Activated T-helper 2 cell treated with anti-CD3 and anti-CD28 coated beads, Interferon-gamma antibody, Interleukin-2, Interleukin-4, amounts not matched to agents 10 μg/mL and 5 μg/mL and 100 μg/mL, durations not matched to agents 14 hours and 24 hours and 36 hours (primary cell): ENCODE measurements at regions of chr3 and their contacts with region 1.

Region 1: GRCh38 chr3:150763122-150763841 is at the start of gene SIAH2:
- DNase-seq: peak; percentile 91
- H3K4me3 Mint-ChIP-seq: peak within 1 kb of the TSS; percentile 100
- H3K27ac Mint-ChIP-seq: peak within 1 kb of the TSS; percentile 100
- H3K4me1 Mint-ChIP-seq: peaks cover 50% of the 10 kb centered on the region
- H3K27me3 Mint-ChIP-seq: no peaks in the 10 kb centered on the region
- total RNA-seq, gene SIAH2: 108 and 116 TPM in 2 replicates

Region 2: DNA sequence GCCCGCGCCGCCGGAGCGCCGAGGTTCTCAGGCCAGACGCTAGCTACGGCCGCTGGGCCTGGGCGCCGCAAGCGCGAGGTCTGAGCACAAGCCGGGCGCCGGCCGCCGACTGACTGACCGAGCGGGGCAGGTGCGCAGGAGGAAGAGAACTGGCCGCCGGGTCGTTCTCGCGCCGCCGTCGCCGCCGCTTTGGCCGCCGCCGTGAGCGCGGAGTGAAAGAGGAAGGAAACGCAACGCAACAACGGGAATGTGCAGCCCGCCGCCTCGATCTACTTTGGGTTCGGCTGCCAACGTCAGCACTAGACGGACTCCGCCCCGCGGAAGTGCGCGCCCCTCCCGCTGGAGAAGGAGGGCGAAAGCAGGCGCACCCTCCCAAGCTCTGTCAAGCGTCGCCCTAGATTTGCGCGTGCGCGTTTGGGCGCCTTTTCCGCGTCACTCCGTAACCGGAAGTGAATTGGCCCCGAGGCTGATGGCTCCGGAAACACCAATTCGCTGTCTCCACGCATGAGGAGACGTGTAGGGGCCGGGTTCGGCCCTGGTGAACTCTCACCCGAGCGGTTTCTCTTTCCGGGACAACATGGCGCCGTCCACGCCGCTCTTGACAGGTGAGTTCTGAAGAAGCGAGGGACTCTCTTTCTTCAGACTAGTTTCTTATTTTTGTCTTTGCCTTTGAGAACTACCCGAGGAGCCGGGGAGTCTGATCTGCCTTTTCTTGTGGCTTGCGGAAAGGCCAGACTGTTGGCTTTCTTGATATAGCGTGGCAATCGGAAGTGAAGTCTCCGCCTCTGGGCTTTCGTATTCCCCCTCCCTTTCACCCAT is 216.8 kb before region 1 on chr3 and contains the starts of genes EIF2A and SERP1:
- intact Hi-C with region 1: loop called (anchors 1 kb)
- DNase-seq: peak; percentile 100
- H3K4me3 Mint-ChIP-seq: peak within 1 kb of the TSS; percentile 97
- H3K27ac Mint-ChIP-seq: peak within 1 kb of the TSS; percentile 92
- H3K4me1 Mint-ChIP-seq: peaks cover 56% of the 10 kb centered on the region
- H3K27me3 Mint-ChIP-seq: no peaks in the 10 kb centered on the region
- total RNA-seq, gene EIF2A: 124 and 126 TPM in 2 replicates
- total RNA-seq, gene SERP1: 89.2 and 91.7 TPM in 2 replicates

Region 3: GRCh38 chr3:150691414-150692040 is 71.8 kb before region 1 on chr3:
- intact Hi-C with region 1: no loop called
- DNase-seq: no peak
- H3K4me3 Mint-ChIP-seq: no peak overlapping the region
- H3K27ac Mint-ChIP-seq: no peak overlapping the region
- H3K4me1 Mint-ChIP-seq: no peaks in the 10 kb centered on the region
- H3K27me3 Mint-ChIP-seq: peaks cover 2% of the 10 kb centered on the region

Region 4: DNA sequence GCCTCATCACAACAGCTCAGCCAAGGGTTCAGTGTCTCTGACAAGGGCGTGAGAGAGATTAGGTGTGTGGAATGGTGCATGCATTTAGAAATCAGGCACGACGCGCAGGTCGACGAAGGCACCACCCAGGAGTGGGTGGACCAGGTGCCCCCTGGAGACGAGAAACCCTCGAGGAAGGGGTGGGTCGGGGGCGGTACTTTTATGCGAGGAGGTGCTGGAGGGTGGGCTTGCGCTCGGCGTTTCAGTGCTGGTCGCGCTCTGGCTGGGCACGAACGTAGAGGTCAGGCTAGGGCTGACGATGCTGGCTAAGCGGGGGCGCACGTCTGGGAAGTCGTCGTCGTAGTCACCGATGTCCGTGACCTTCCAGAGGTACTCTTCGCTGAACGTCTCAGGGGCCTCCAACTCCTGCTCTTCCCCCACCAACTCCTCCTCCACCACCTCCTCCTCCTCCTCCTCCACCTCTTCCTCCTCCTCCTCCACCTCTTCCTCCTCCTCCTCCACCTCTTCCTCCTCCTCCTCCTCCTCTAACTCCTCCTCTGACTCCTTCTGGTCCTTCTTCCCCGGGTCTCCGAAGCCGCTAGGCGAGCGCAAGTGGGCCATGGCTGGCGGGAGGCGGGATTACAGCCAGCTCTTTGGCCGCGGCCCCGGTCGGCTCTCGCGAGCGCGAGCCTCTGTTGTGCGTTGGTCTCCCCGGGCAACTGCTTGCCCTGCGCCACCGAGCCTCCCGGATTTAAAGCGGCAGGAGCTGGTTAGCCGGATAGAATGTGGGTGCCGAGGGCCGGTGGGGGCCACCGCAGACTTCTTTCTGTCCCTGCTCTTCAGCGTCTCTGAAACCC is 59.8 kb before region 1 on chr3 and contains the start of gene ERICH6:
- intact Hi-C with region 1: loop called (anchors 5 kb)
- DNase-seq: peak; percentile 83
- H3K4me3 Mint-ChIP-seq: peak within 1 kb of the TSS; percentile 94
- H3K27ac Mint-ChIP-seq: peak within 1 kb of the TSS; percentile 97
- H3K4me1 Mint-ChIP-seq: peaks cover 25% of the 10 kb centered on the region
- H3K27me3 Mint-ChIP-seq: peaks cover 7% of the 10 kb centered on the region
- total RNA-seq, gene ERICH6: 0.21 and 0.39 TPM in 2 replicates

Region 5: DNA sequence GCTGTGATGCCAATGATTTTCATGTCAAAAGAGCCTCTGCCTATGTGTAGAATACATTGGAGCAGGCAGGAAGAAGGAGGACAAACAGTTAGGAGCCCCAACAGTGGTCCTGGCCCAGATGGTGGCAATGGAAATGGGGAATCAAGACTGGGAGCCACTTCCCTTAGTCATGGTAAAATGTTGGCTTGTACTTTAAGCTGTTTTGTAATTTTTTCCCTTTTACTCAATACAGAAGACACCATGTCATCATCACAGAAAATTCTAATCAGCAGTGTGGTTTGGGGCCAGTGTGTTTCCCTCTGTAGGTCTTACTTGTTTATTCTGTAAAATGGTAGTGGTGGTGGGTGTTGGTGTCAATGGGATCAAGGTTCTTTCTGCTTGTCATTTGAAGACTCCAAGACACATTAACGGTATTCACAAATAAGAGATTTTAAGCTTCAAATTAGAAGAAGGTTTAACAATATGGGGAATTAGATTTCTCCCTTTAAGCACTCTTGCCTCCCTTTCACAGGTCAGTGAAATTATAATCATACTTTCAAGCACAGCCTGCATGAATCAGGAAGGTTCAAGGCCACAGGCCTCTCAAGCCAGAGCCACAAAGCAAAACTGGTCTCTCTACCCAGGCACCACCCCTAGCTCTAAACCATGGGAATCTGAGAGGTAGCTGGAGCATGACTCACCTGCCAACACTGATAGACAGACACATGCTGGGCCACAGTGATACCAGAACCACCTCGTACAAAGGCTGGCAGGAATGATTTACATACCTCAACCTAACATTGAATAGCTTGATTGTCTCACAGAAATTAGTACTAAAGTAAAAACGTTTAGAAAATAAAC is 25.2 kb before region 1 on chr3:
- intact Hi-C with region 1: loop called (anchors 1 kb)
- DNase-seq: no peak
- H3K4me3 Mint-ChIP-seq: peak overlapping the region; percentile 53
- H3K27ac Mint-ChIP-seq: peak overlapping the region; percentile 100
- H3K4me1 Mint-ChIP-seq: peaks cover 91% of the 10 kb centered on the region
- H3K27me3 Mint-ChIP-seq: no peaks in the 10 kb centered on the region

Region 6: GRCh38 chr3:150787741-150788370 is 24.6 kb after region 1 on chr3:
- intact Hi-C with region 1: loop called (anchors 1 kb)
- DNase-seq: peak; percentile 59
- H3K4me3 Mint-ChIP-seq: no peak overlapping the region
- H3K27ac Mint-ChIP-seq: no peak overlapping the region
- H3K4me1 Mint-ChIP-seq: peaks cover 41% of the 10 kb centered on the region
- H3K27me3 Mint-ChIP-seq: peaks cover 2% of the 10 kb centered on the region

Region 7: DNA sequence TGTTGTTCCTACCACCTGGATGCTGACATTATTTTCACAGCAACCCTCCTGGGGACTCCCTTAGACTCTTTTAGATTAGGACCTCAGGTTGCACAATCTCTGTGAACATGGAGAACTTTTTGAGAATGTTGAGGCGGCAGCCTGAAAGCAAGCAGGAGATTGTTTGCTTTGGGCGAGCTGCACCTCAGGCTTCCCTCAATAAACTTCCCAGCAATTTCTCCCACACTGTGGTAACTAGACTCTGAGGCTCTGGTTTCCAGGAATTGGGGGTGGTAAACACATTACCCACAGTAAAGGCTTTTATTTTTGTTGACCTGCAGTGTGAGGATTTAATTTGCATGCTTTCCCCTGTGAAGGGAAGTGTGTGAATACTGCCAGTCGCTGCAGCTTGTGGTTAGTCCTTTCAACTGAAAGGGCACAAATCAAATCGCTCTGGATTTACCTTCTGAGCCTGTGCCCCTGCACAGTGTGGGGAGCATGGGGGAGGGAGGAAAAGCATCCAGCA is 34.9 kb after region 1 on chr3:
- intact Hi-C with region 1: no loop called
- DNase-seq: no peak
- H3K4me3 Mint-ChIP-seq: no peak overlapping the region
- H3K27ac Mint-ChIP-seq: no peak overlapping the region
- H3K4me1 Mint-ChIP-seq: peaks cover 10% of the 10 kb centered on the region
- H3K27me3 Mint-ChIP-seq: peaks cover 22% of the 10 kb centered on the region